GM12878 (cell line): ENCODE measurements at regions of chr7 and their contacts with region 1.

Region 1: GRCh38 chr7:33243319-33243881 is 114.0 kb downstream of the BBS9 start:
- DNase-seq: no peak
- ATAC-seq: peak; percentile 57
- H3K4me3 ChIP-seq: no peak overlapping the region
- H3K27ac ChIP-seq: no peak overlapping the region
- H3K4me1 ChIP-seq: no peaks in the 10 kb centered on the region
- H3K27me3 ChIP-seq: no peaks in the 10 kb centered on the region
- CTCF ChIP-seq: peak; percentile 34 to 59 (median 44); a peak in 4 of 6 replicates
- EP300 ChIP-seq: no peak
- POLR2A ChIP-seq: no peak
- RAD21 ChIP-seq: peak; percentile 71

Region 2: DNA sequence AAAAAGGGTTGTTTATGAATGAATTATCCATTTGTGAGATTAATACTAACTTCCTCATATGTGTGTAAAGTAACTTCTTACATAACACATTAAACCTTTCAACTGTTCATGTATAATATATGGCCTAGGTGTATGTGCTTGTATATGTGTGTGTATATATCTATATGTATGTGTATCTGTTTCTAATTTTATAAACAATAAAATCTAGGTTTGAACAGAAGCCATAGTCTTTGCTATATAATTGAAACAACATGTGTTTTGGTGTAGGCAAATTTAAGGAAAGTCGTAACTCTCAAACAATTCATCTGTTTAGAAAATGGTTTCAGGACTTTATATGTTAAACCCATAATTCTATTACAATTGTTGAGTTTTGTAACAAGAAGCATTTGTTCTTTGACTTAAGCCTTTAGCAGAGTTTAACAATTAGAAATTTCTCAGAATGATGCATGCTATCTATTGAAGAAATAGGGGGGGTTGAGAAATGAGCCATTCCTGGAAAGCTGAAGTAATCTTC is 10.7 kb before region 1 on chr7:
- CTCF ChIA-PET with region 1: interaction called, 10 read pairs
- POLR2A ChIA-PET with region 1: no interaction called
- RAD21 ChIA-PET with region 1: no interaction called
- SMC1A ChIA-PET with region 1: interaction called, 10 read pairs
- in situ Hi-C with region 1: no loop called
- intact Hi-C with region 1: no loop called
- DNase-seq: no peak
- ATAC-seq: no peak
- H3K4me3 ChIP-seq: no peak overlapping the region
- H3K27ac ChIP-seq: no peak overlapping the region
- H3K4me1 ChIP-seq: no peaks in the 10 kb centered on the region
- H3K27me3 ChIP-seq: no peaks in the 10 kb centered on the region
- CTCF ChIP-seq: no peak
- EP300 ChIP-seq: no peak
- POLR2A ChIP-seq: no peak
- RAD21 ChIP-seq: no peak

Region 3: GRCh38 chr7:33744293-33745075 is 501.1 kb after region 1 on chr7:
- CTCF ChIA-PET with region 1: no interaction called
- POLR2A ChIA-PET with region 1: no interaction called
- RAD21 ChIA-PET with region 1: no interaction called
- SMC1A ChIA-PET with region 1: interaction called, 3 read pairs
- in situ Hi-C with region 1: no loop called
- intact Hi-C with region 1: loop called (anchors 1 kb)
- DNase-seq: no peak
- ATAC-seq: peak; percentile 82
- H3K4me3 ChIP-seq: no peak overlapping the region
- H3K27ac ChIP-seq: no peak overlapping the region
- H3K4me1 ChIP-seq: no peaks in the 10 kb centered on the region
- H3K27me3 ChIP-seq: no peaks in the 10 kb centered on the region; a peak in 1 of 4 replicates
- CTCF ChIP-seq: peak; percentile 27 to 47 (median 32); a peak in 4 of 6 replicates
- EP300 ChIP-seq: no peak
- POLR2A ChIP-seq: no peak
- RAD21 ChIP-seq: peak; percentile 60

Region 4: DNA sequence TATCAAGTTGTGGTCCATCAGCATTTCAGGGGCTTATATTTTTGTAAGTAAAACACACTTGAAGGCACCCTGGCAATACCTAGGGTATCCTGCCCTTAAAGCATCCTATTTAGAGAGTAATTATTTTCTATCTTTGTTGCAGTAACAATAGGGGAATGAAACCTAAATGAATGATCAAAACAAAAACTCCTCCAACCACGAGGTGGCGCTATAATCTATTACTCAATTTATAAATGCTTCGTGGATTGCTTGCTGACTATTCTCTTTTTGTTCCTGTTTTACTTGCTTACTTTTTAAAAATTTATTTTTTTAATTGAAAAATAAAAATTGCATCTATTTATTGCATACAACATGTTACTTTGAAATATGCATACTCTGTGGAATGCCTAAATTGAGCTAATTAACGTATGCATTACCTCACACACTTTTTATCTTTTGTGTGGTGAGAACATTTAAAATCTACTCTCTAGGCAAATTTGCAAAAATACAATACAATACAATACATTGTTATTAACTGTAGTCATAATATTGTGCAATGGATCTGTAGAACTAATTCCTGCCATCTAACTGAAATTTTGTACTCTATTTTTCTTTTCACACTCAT is 514.3 kb after region 1 on chr7:
- CTCF ChIA-PET with region 1: no interaction called
- POLR2A ChIA-PET with region 1: no interaction called
- RAD21 ChIA-PET with region 1: no interaction called
- SMC1A ChIA-PET with region 1: interaction called, 3 read pairs
- in situ Hi-C with region 1: no loop called
- intact Hi-C with region 1: loop called (anchors 5 kb)
- DNase-seq: no peak
- ATAC-seq: peak; percentile 31; the same call in 1 of the 3 replicates
- H3K4me3 ChIP-seq: no peak overlapping the region
- H3K27ac ChIP-seq: no peak overlapping the region
- H3K4me1 ChIP-seq: no peaks in the 10 kb centered on the region; the same call in 1 of the 2 replicates
- H3K27me3 ChIP-seq: peaks cover 0 to 1% of the 10 kb centered on the region in 2 experiments; a peak in 1 of 4 replicates
- CTCF ChIP-seq: peak; percentile 45 to 50 (median 49); a peak in 5 of 6 replicates
- EP300 ChIP-seq: no peak
- POLR2A ChIP-seq: no peak
- RAD21 ChIP-seq: peak; percentile 52

Region 5: GRCh38 chr7:33895025-33895804 is 651.8 kb after region 1 on chr7:
- CTCF ChIA-PET with region 1: interaction called, 3 read pairs
- POLR2A ChIA-PET with region 1: no interaction called
- RAD21 ChIA-PET with region 1: no interaction called
- SMC1A ChIA-PET with region 1: interaction called, 3 read pairs
- in situ Hi-C with region 1: no loop called
- intact Hi-C with region 1: loop called (anchors 2 kb)
- DNase-seq: no peak
- ATAC-seq: peak; percentile 99
- H3K4me3 ChIP-seq: no peak overlapping the region
- H3K27ac ChIP-seq: no peak overlapping the region
- H3K4me1 ChIP-seq: no peaks in the 10 kb centered on the region
- H3K27me3 ChIP-seq: 0 out of 4 replicates have a peak, but pooled peaks cover 2 to 7% of the 10 kb centered on the region in 2 experiments
- CTCF ChIP-seq: peak; percentile 72 to 90 (median 87)
- EP300 ChIP-seq: no peak
- POLR2A ChIP-seq: no peak
- RAD21 ChIP-seq: peak; percentile 64